ENCODE measurements at regions of chr15 and their contacts with region 1.

Region 1: GRCh38 chr15:52208306-52208946 is 17.2 kb upstream of the GNB5 start:
- DNase-seq: peak; percentile 62
- H3K4me3 ChIP-seq: no peak overlapping the region
- H3K27ac ChIP-seq: no peak overlapping the region
- H3K4me1 ChIP-seq: no peaks in the 10 kb centered on the region
- H3K27me3 ChIP-seq: no peaks in the 10 kb centered on the region
- CTCF ChIP-seq: peak; percentile 91 to 97

Region 2: GRCh38 chr15:51649659-51650521 is 558.5 kb before region 1 on chr15:
- CTCF ChIA-PET with region 1: no interaction called
- dilution Hi-C with region 1: no loop called
- in situ Hi-C with region 1: no loop called
- intact Hi-C with region 1: loop called (anchors 10 kb)
- DNase-seq: peak; percentile 59
- H3K4me3 ChIP-seq: no peak overlapping the region
- H3K27ac ChIP-seq: no peak overlapping the region
- H3K4me1 ChIP-seq: peaks cover 4% of the 10 kb centered on the region
- H3K27me3 ChIP-seq: no peaks in the 10 kb centered on the region
- CTCF ChIP-seq: peak; percentile 68 to 82

Region 3: GRCh38 chr15:51982013-51982769 is 226.2 kb before region 1 on chr15:
- CTCF ChIA-PET with region 1: interaction called, 8 read pairs
- dilution Hi-C with region 1: no loop called
- in situ Hi-C with region 1: loop called in 1 of 2 experiments (anchors 10 kb)
- intact Hi-C with region 1: loop called (anchors 1 kb)
- DNase-seq: peak; percentile 76
- H3K4me3 ChIP-seq: peak overlapping the region; percentile 20 to 25 (median 23)
- H3K27ac ChIP-seq: peak overlapping the region; percentile 75
- H3K4me1 ChIP-seq: peaks cover 8% of the 10 kb centered on the region
- H3K27me3 ChIP-seq: no peaks in the 10 kb centered on the region
- CTCF ChIP-seq: peak; percentile 63 to 72

Region 4: GRCh38 chr15:52071546-52071945 is 136.9 kb before region 1 on chr15:
- CTCF ChIA-PET with region 1: no interaction called
- dilution Hi-C with region 1: no loop called
- in situ Hi-C with region 1: no loop called
- intact Hi-C with region 1: loop called (anchors 2 kb)
- DNase-seq: peak; percentile 61
- H3K4me3 ChIP-seq: no peak overlapping the region
- H3K27ac ChIP-seq: no peak overlapping the region
- H3K4me1 ChIP-seq: peaks cover 58% of the 10 kb centered on the region
- H3K27me3 ChIP-seq: no peaks in the 10 kb centered on the region
- CTCF ChIP-seq: no peak

Region 5: GRCh38 chr15:52139599-52140491 is 68.6 kb before region 1 on chr15:
- CTCF ChIA-PET with region 1: no interaction called
- dilution Hi-C with region 1: no loop called
- in situ Hi-C with region 1: no loop called
- intact Hi-C with region 1: loop called (anchors 2 kb)
- DNase-seq: peak; percentile 50
- H3K4me3 ChIP-seq: no peak overlapping the region
- H3K27ac ChIP-seq: no peak overlapping the region
- H3K4me1 ChIP-seq: peaks cover 4% of the 10 kb centered on the region
- H3K27me3 ChIP-seq: no peaks in the 10 kb centered on the region
- CTCF ChIP-seq: peak; percentile 90 to 93

Region 6: DNA sequence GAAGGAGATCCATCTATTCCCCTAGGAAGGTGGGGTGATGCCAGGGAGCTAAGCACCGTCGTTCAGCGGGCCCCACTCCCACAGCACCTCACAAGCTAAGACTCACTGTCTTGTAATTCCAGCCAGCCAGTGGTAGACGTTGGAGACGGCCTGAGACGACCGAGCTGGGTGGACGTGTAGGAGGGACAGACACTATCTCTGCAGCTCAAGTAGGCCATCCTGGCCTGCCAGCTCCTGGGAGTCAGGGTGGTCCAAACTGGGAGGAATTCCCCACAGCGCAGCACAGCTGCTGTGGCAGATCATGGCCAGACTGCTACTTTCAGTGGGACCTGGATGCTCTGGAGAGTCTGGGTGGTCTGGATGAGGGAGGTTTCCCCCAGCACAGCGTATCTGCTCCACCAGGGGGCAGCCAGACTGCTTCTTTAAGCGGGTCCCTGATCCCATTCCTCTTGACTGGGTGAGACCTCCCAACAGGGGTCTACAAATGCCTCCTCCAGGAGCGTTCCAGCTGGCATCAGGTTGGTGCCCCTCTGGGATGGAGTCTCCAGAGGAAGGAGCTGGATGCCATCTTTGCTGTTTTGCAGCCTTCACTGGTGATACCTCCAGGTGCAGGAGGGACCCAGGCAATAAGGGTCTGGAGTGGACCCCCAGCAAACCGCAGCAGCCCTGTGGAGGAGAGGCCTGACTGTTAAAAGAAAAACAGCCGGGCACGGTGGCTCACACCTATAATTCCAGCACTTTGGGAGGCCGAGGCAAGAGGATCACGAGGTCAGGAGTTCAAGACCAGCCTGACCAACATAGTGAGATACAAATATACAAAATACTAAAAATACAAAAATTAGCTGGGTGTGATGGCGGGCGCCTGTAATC is 44.9 kb before region 1 on chr15:
- CTCF ChIA-PET with region 1: interaction called, 3 read pairs
- dilution Hi-C with region 1: no loop called
- in situ Hi-C with region 1: no loop called
- intact Hi-C with region 1: loop called (anchors 1 kb)
- DNase-seq: no peak
- H3K4me3 ChIP-seq: no peak overlapping the region
- H3K27ac ChIP-seq: no peak overlapping the region
- H3K4me1 ChIP-seq: no peaks in the 10 kb centered on the region
- H3K27me3 ChIP-seq: no peaks in the 10 kb centered on the region
- CTCF ChIP-seq: peak in 1 of 2 donors; percentile 20

Region 7: DNA sequence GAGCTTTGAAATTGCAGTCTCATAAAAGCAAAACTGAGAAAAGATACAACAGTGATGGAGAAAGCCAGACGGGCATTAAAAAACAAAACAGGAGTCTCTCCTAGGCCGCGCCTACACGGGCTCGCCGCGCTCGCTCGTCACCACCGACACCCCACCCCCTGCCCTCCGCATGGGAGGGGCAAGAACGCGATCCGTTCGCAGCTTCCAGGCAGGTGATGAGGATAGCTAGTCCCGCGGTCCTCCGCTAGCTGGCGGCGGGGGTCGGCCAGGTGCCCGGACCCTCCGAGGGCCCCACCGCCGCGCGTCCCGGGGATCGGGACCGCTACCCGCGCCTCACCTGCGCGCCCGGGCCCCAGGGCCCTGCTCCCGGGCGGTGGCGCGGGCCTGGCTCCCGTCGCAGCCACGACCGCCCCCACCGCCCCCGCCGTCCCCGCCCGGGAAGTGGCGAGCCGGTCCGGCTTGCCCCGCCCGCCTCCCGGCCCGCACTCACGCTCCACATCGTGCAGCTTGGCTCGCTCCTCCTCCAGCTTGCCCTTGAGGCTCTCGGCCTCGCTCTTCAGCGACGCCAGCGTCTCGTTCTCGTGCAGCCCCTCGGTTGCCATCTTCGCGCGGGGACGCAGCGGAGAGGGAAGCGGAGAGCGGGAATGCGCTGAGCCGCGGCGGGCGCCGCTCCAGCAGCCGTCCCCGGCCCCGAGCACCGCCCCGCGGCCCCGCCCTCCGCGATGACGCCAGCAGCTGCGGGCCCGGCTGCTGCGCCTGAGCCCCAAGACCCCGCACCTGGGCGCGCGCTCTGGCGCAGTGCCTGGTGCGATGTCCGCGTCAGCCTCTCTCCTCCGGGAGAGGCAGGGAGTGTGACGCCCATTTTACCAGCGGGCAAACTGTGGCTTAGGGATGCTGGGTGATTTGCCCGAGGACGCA is 28.9 kb before region 1 on chr15:
- CTCF ChIA-PET with region 1: interaction called, 11 read pairs
- dilution Hi-C with region 1: no loop called
- in situ Hi-C with region 1: no loop called
- intact Hi-C with region 1: loop called (anchors 2 kb)
- DNase-seq: peak; percentile 85
- H3K4me3 ChIP-seq: peak overlapping the region; percentile 72 to 95 (median 95)
- H3K27ac ChIP-seq: peak overlapping the region; percentile 70
- H3K4me1 ChIP-seq: peaks cover 21% of the 10 kb centered on the region
- H3K27me3 ChIP-seq: no peaks in the 10 kb centered on the region
- CTCF ChIP-seq: no peak

Region 8: DNA sequence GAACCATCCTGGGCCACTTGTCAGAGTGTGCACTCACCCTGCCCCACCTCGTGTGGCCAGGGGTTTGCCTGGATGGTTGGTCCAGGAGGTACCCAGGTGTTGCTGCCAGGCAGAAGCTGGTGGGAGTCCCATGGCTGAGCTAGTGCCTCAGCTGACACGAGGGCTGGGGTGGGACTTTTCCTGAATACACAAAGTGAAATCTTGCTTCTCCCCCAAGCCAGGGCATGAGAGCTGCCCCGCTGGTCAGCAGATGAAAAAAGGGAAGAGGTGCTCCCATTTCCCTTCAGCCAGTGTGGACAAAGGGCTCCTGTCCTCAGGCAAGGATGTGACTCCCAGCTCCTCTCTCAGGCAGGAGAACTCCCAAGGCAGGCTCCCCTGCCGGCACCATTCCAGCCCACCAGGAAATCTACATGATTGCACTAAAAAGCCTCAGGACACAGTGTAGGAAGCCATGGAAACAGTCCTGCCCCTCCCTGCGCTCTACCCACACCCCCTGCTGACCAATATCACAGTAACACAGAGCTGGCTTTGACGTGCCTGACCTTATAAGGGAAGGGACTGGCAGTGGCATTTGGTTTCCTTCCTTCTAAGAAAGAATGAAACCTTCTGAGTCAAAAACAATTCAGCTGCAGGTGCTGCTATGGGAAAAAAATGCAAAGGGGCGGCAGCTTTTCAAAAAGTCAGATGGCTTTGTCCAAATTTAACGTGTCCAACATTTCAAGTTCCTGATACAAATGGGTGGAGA is 53.2 kb after region 1 on chr15:
- CTCF ChIA-PET with region 1: no interaction called
- dilution Hi-C with region 1: no loop called
- in situ Hi-C with region 1: no loop called
- intact Hi-C with region 1: no loop called
- DNase-seq: peak; percentile 90
- H3K4me3 ChIP-seq: no peak overlapping the region
- H3K27ac ChIP-seq: no peak overlapping the region
- H3K4me1 ChIP-seq: peaks cover 17% of the 10 kb centered on the region
- H3K27me3 ChIP-seq: no peaks in the 10 kb centered on the region
- CTCF ChIP-seq: peak in 1 of 2 donors; percentile 28

Measured in mammary epithelial cell (primary cell).